Posterior cingulate gyrus (tissue), 11 donors: ENCODE measurements at regions of chr6 and their contacts with region 1.

Region 1: DNA sequence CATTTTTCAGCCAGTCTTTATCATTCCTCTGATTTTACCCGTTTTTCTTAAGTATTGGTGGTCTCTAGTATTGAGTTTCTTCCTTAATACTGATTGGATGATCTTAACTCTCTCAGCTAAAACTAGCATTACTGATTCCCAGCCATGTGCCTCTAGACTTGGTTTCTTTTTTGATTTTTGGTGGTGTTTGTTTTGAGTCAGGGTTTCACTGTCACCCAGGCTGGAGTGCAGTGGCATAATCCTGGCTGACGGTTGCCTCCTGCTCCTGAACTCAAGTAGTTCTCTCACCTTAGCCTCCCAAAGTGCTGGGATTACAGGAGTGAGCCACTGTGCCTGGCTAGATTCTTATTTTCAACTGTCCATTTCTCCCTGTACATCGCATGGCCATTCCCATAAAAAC is 24.9 kb downstream of the DPPA5 start:
- DNase-seq: no peak

Region 2: GRCh38 chr6:72622094-72622940 is 706.9 kb before region 1 on chr6:
- intact Hi-C with region 1: loop called (anchors 5 kb)
- DNase-seq: peak; percentile 18 to 92 (median 51)

Region 3: DNA sequence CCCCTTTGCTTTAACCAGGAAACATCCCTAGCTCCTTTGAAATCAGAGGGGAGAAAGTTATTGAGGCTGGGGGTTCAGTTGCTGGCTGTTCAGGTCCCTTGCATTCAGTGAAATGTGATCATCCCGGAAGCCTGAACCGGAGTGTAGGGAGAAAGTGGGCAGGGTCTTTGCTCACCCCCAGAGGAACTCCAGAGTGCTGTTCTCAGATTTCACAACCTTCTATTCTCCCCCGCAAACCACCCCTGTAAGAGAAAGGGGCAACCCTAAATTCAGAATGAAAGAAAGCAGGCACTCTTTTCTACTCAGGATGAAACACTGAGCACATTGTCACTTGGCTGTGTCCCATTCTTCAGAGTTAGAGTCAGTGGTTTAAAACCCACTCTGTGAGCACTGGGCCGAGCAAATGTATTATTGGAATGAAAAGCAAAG is 243.7 kb before region 1 on chr6:
- intact Hi-C with region 1: no loop called
- DNase-seq: no peak

Region 4: DNA sequence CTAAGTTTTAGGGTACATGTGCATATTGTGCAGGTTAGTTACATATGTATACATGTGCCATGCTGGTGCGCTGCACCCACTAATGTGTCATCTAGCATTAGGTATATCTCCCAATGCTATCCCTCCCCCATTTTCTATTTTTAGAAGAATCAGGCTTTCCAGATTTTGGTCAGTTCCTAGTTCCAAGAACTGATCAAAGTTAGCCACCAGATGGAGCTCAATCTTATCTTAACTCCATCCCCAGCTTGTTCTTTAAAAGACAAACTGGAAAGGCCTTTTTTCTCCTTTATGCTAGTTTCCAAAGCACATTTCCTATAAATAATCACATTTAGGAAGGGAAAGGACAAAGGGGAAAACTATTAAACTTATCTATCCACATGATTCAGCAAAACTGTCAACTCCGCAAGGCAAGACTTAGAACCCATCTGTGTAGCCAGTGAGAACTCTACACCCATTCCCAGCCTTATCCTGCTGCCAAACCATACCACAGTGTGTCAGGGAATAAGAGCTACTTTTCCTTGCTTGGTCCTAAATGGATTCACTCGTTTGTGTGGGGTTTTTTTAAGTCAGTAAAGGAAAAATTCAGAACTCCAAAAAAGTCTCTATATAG is 43.4 kb before region 1 on chr6:
- intact Hi-C with region 1: loop called (anchors 1 kb)
- DNase-seq: no peak

Region 5: GRCh38 chr6:73409395-73409794 is 80.2 kb after region 1 on chr6:
- intact Hi-C with region 1: no loop called
- DNase-seq: no peak

Region 6: GRCh38 chr6:73471686-73472290 is 142.6 kb after region 1 on chr6:
- intact Hi-C with region 1: no loop called
- DNase-seq: no peak